ENCODE measurements at regions of chr4 and their contacts with region 1.

Region 1: DNA sequence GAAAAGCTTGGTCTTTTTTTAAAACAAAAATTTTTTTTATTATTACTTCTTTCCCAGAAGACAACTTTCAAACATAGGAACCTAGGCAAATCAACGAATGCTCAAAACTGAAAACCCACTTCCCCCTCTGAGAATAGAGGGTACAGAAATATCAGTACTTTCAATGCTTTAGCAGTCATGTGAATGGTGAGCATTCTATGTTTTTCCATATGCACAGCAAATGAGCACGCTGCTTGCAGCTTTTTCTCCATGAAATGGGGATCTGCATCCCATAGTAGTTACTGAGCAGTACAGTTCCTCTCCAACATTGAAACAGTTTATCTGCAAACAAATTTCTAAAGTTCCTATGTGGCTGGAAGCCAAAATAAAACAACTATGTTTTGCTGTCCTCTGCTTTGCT is 108.4 kb upstream of the BMP2K start:
- DNase-seq: peak; percentile 69
- ATAC-seq: peak; percentile 86
- H3K4me3 ChIP-seq: peak overlapping the region; percentile 27; the same call in 1 of the 2 replicates
- H3K27ac ChIP-seq: no peak overlapping the region
- H3K4me1 ChIP-seq: peaks cover 16% of the 10 kb centered on the region
- H3K27me3 ChIP-seq: peaks cover 0 to 1% of the 10 kb centered on the region in 2 experiments; a peak in 1 of 4 replicates
- CTCF ChIP-seq: no peak
- EP300 ChIP-seq: 0 out of 4 replicates have a peak, but pooled peaks have one; percentile 28 to 37
- POLR2A ChIP-seq: no peak
- RAD21 ChIP-seq: no peak

Region 2: GRCh38 chr4:78629991-78630541 is 37.7 kb before region 1 on chr4:
- CTCF ChIA-PET with region 1: interaction called, 3 read pairs
- POLR2A ChIA-PET with region 1: no interaction called
- RAD21 ChIA-PET with region 1: interaction called, 4 read pairs
- SMC1A ChIA-PET with region 1: interaction called, 12 read pairs
- in situ Hi-C with region 1: no loop called
- intact Hi-C with region 1: no loop called
- DNase-seq: no peak
- ATAC-seq: peak; percentile 27
- H3K4me3 ChIP-seq: no peak overlapping the region
- H3K27ac ChIP-seq: no peak overlapping the region
- H3K4me1 ChIP-seq: peaks cover 39% of the 10 kb centered on the region
- H3K27me3 ChIP-seq: no peaks in the 10 kb centered on the region
- CTCF ChIP-seq: no peak
- EP300 ChIP-seq: no peak
- POLR2A ChIP-seq: no peak
- RAD21 ChIP-seq: no peak

Region 3: GRCh38 chr4:78638337-78639172 is 29.2 kb before region 1 on chr4:
- CTCF ChIA-PET with region 1: interaction called, 8 read pairs
- POLR2A ChIA-PET with region 1: interaction called, 7 read pairs
- RAD21 ChIA-PET with region 1: interaction called, 3 read pairs
- SMC1A ChIA-PET with region 1: interaction called, 18 read pairs
- in situ Hi-C with region 1: no loop called
- intact Hi-C with region 1: no loop called
- DNase-seq: peak; percentile 86
- ATAC-seq: peak; percentile 78
- H3K4me3 ChIP-seq: no peak overlapping the region; the same call in 1 of the 2 replicates
- H3K27ac ChIP-seq: peak overlapping the region; percentile 62
- H3K4me1 ChIP-seq: peaks cover 57% of the 10 kb centered on the region
- H3K27me3 ChIP-seq: no peaks in the 10 kb centered on the region
- CTCF ChIP-seq: no peak
- EP300 ChIP-seq: peak; percentile 79; a peak in 3 of 4 replicates
- POLR2A ChIP-seq: no peak
- RAD21 ChIP-seq: no peak

Region 4: DNA sequence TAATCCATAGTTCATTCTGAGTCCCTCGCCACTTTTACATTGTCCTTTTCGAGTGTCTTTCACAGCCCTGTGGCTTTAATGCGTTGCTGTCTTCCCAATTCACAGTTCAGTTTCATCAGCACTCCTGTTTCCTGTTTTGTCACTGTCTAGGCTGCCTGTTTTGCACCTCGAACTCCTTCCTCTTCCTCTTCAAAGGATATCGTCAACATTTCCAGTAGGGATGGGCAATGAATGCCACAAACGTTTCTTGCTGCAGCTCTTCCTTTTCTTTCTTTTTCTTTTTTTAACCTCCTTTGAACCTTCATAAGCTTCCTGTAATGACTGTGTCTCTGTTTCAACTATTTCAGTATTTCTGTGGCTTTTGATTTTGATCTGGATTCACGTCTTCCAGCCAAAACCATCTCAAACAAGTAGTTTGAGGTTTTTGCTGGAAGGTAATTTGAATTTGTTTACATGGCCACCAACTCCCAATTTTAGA is 10.8 kb before region 1 on chr4:
- CTCF ChIA-PET with region 1: interaction called, 13 read pairs
- POLR2A ChIA-PET with region 1: interaction called, 6 read pairs
- RAD21 ChIA-PET with region 1: interaction called, 10 read pairs
- SMC1A ChIA-PET with region 1: interaction called, 8 read pairs
- in situ Hi-C with region 1: no loop called
- intact Hi-C with region 1: no loop called
- DNase-seq: no peak
- ATAC-seq: peak; percentile 25
- H3K4me3 ChIP-seq: peak overlapping the region; percentile 39
- H3K27ac ChIP-seq: peak overlapping the region; percentile 28; the same call in 1 of the 2 replicates
- H3K4me1 ChIP-seq: peaks cover 34% of the 10 kb centered on the region
- H3K27me3 ChIP-seq: no peaks in the 10 kb centered on the region
- CTCF ChIP-seq: no peak
- EP300 ChIP-seq: peak; percentile 47 to 76; a peak in 2 of 4 replicates
- POLR2A ChIP-seq: no peak
- RAD21 ChIP-seq: 0 out of 2 replicates have a peak, but pooled peaks have one; percentile 7

Region 5: DNA sequence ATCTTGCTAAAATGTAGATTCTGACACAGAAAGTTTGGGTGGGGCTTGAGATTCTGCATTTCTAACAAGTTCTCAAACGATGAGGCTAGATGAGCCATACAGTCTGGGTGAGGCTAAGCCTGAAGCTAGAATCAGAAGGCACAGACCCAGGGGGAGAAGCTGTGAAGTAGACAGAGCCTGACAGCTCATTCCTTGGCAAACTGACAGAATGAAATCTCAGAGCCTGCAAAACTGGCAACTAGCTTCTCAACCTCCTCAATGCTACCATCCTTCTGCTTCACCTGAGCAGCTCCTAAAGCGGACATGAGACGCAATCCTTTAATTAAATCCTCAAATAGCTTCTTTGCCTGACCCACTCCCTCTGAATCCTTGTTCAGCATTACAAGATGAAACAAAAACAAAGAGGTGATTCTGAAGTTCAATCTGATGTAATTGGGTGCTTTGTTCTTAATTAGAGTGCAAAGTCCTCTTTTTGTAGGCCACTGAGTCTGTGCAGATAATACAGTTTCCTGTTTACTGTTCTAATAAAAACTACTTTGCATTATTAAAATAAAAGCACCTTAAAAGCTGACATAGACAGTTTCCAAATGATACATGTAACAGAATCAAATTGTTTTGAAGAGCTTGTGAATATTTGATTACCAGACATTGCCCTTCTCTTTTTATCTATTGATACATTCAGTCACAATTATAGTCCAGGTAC is 37.4 kb after region 1 on chr4:
- CTCF ChIA-PET with region 1: interaction called, 4 read pairs
- POLR2A ChIA-PET with region 1: interaction called, 4 read pairs
- RAD21 ChIA-PET with region 1: interaction called, 4 read pairs
- SMC1A ChIA-PET with region 1: interaction called, 11 read pairs
- in situ Hi-C with region 1: no loop called
- intact Hi-C with region 1: no loop called
- DNase-seq: no peak
- ATAC-seq: peak; percentile 40
- H3K4me3 ChIP-seq: no peak overlapping the region
- H3K27ac ChIP-seq: no peak overlapping the region
- H3K4me1 ChIP-seq: peaks cover 24% of the 10 kb centered on the region
- H3K27me3 ChIP-seq: no peaks in the 10 kb centered on the region
- CTCF ChIP-seq: no peak
- EP300 ChIP-seq: no peak
- POLR2A ChIP-seq: no peak
- RAD21 ChIP-seq: no peak

Region 6: GRCh38 chr4:78737035-78737434 is 69.3 kb after region 1 on chr4:
- CTCF ChIA-PET with region 1: interaction called, 3 read pairs
- POLR2A ChIA-PET with region 1: no interaction called
- RAD21 ChIA-PET with region 1: no interaction called
- SMC1A ChIA-PET with region 1: interaction called, 16 read pairs
- in situ Hi-C with region 1: no loop called
- intact Hi-C with region 1: no loop called
- DNase-seq: peak; percentile 26
- ATAC-seq: peak; percentile 69
- H3K4me3 ChIP-seq: no peak overlapping the region
- H3K27ac ChIP-seq: no peak overlapping the region
- H3K4me1 ChIP-seq: peaks cover 33% of the 10 kb centered on the region
- H3K27me3 ChIP-seq: no peaks in the 10 kb centered on the region
- CTCF ChIP-seq: no peak
- EP300 ChIP-seq: peak in 1 of 2 experiments; percentile 64; a peak in 2 of 4 replicates
- POLR2A ChIP-seq: no peak
- RAD21 ChIP-seq: no peak

Region 7: DNA sequence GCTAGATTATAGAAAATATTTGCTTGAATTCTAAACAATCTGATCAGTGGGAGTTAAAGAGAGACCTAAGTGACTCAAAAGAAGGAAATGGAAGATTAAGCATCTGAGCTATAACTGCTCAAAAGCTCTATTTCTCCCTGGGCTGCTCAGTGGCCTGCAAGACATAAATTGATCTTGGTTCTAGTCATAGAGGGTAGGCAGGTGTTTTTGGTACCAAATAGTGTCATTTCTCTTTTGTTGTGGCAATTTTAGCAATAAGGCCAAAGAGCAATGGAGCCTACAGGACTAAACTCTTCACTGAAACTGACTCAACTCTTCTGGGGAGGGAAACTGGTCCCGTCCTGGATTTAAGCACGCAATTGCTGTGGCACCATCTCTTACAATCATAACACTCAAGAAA is 74.5 kb after region 1 on chr4:
- CTCF ChIA-PET with region 1: no interaction called
- POLR2A ChIA-PET with region 1: no interaction called
- RAD21 ChIA-PET with region 1: interaction called, 3 read pairs
- SMC1A ChIA-PET with region 1: interaction called, 16 read pairs
- in situ Hi-C with region 1: no loop called
- intact Hi-C with region 1: no loop called
- DNase-seq: no peak
- ATAC-seq: peak; percentile 63
- H3K4me3 ChIP-seq: no peak overlapping the region
- H3K27ac ChIP-seq: no peak overlapping the region
- H3K4me1 ChIP-seq: peaks cover 6% of the 10 kb centered on the region; the same call in 1 of the 2 replicates
- H3K27me3 ChIP-seq: no peaks in the 10 kb centered on the region
- CTCF ChIP-seq: no peak
- EP300 ChIP-seq: no peak
- POLR2A ChIP-seq: no peak
- RAD21 ChIP-seq: no peak